ENCODE measurements at regions of chr2 and their contacts with region 1.

Region 1: GRCh38 chr2:127049927-127050802 is 56.8 kb downstream of the BIN1 start:
- DNase-seq: peak in 1 of 2 experiments; percentile 65
- H3K4me3 ChIP-seq: no peak overlapping the region
- H3K27ac ChIP-seq: no peak overlapping the region
- H3K4me1 ChIP-seq: no peaks in the 10 kb centered on the region
- H3K27me3 ChIP-seq: no peaks in the 10 kb centered on the region
- CTCF ChIP-seq: peak; percentile 99

Region 2: DNA sequence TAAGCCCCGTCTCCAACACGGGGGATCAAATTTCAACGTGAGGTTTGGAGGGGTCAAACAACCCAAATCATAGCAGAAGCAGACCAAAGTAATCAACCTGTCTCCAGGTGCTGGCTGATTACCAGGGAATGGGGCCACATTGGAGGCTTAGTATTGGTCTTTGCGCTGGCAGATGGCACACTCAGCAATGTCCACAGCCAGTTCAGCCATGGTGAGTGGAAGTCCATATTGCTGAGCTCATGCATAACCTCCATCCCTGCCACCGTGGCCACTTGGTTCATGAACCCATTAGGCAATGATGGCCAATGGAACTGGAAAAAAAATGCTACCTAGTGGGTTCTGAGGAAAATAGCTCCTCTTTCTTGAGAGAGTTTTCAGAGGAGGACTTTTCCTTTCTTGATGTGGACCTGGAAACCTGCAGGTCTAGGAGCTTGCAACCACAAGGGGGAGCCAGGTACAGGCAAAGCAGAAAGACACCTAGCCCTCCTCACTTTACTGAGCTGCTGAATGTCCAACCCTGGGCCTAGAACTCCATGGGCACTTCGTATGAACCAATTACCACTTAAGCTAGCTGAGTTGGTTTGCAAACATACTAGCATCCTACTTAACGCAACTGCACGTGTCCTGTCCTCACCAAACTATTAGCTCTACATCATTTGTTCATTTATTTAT is 522.2 kb before region 1 on chr2:
- CTCF ChIA-PET with region 1: no interaction called
- POLR2A ChIA-PET with region 1: no interaction called
- intact Hi-C with region 1: no loop called
- DNase-seq: peak; percentile 29 to 43
- H3K4me3 ChIP-seq: no peak overlapping the region
- H3K27ac ChIP-seq: no peak overlapping the region
- H3K4me1 ChIP-seq: no peaks in the 10 kb centered on the region
- H3K27me3 ChIP-seq: no peaks in the 10 kb centered on the region
- CTCF ChIP-seq: peak; percentile 68

Region 3: DNA sequence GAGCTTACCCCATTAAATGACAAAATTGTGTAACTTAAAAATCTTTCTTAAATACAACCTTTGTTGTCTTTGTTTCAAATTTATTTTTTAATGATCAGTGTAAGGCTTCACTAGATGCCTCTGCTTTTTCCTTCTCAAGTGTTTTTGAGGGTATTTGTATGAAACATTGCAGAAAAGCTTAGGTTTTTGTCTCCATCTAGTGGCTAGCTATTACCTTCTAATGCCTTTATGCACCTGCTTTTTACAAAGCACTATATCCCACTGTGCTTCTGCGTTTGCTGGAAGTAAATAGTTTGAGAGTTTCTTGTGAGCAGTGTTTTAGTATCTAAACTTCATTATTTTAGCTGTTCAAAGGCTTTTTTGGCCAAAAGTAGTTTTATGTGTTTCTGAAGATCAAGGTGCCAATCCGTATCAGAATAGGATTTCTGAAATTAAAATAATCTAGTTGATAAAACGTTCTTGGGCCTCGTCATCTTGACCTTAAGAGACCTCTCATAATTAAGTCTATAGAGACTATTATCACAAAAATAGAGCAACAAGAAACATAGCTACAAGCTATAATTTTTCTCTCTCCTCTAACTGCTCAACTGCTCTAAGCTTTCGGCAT is 429.2 kb after region 1 on chr2:
- CTCF ChIA-PET with region 1: no interaction called
- POLR2A ChIA-PET with region 1: no interaction called
- intact Hi-C with region 1: loop called (anchors 5 kb)
- DNase-seq: peak in 1 of 2 experiments; percentile 55
- H3K4me3 ChIP-seq: no peak overlapping the region
- H3K27ac ChIP-seq: no peak overlapping the region
- H3K4me1 ChIP-seq: no peaks in the 10 kb centered on the region
- H3K27me3 ChIP-seq: no peaks in the 10 kb centered on the region
- CTCF ChIP-seq: peak; percentile 91